Natural killer cell (primary cell): ENCODE measurements at regions of chr12 and their contacts with region 1.

Region 1: DNA sequence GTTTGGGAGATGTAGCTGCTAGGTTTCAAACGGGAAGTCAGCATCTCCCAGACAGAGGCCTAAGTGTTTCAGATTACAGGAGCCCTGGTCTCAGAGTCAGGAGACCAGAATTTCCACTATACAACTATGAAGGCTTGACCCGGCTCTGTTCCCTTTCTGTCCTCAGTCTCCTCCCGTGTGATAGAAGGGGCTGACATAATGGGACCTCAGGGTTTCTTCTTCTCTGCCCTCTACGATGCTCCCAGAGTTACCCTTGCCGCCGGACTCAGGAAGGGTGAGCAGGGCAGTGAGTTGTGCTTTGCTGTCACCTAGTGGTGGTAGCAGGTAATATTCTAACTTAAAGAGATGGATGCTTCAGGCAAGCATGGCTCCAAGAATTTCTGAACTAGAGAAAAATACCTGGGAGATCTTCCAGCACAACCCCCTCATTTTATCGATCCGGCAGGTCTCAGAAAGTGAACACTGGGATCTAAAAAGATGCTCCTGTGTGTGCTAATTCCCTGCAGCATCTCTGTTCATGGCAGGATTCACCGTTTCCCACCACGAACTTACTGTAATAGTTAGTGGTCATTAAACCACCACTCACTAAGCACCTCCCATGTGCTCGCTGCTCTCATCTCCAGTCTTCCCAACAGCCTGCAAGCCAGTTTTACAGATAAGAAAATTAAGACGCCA is 84.4 kb downstream of the VWF start:
- DNase-seq: peak in 1 of 2 donors; percentile 79
- ATAC-seq: peak; percentile 78 to 92 (median 84)
- H3K4me3 ChIP-seq: no peak overlapping the region
- H3K4me3 Mint-ChIP-seq: no peak overlapping the region
- H3K27ac ChIP-seq: no peak overlapping the region
- H3K27ac Mint-ChIP-seq: peak overlapping the region in 1 of 2 donors; percentile 45
- H3K4me1 ChIP-seq: peaks cover 3% of the 10 kb centered on the region
- H3K4me1 Mint-ChIP-seq: peaks cover 0 to 5% of the 10 kb centered on the region in 2 donors
- H3K27me3 ChIP-seq: no peaks in the 10 kb centered on the region
- H3K27me3 Mint-ChIP-seq: peaks cover 5% of the 10 kb centered on the region in 2 donors
- CTCF ChIP-seq: peak; percentile 88

Region 2: GRCh38 chr12:5965950-5966383 is 74.1 kb before region 1 on chr12:
- intact Hi-C with region 1: loop called (anchors 1 kb)
- DNase-seq: peak in 1 of 2 donors; percentile 63
- ATAC-seq: peak; percentile 73 to 90 (median 80)
- H3K4me3 ChIP-seq: no peak overlapping the region
- H3K4me3 Mint-ChIP-seq: no peak overlapping the region
- H3K27ac ChIP-seq: no peak overlapping the region
- H3K27ac Mint-ChIP-seq: no peak overlapping the region
- H3K4me1 ChIP-seq: no peaks in the 10 kb centered on the region
- H3K4me1 Mint-ChIP-seq: no peaks in the 10 kb centered on the region
- H3K27me3 ChIP-seq: no peaks in the 10 kb centered on the region
- H3K27me3 Mint-ChIP-seq: peaks cover 13 to 20% of the 10 kb centered on the region in 2 donors
- CTCF ChIP-seq: peak; percentile 60

Region 3: DNA sequence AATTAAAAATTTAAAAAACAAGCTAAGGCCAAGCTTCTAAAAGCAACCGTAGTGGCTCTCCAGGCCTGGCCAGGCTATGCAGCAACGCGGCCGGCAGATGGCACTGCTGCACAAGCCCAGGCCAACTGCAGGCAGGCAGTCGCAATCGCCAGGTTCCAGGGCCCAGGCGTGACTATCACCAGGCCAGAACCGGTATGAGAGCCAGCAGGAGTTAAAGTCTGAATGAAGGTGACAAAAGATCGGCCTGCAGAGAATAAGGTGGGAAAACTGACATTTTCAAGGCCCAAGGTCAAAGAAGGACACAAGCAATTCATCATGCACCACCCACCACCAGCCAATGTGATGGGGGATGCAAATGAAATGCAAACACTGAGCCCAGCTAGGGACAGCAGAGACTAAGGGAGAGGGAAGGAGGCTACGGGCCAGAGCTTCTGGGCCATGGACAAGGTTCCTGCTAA is 51.3 kb before region 1 on chr12:
- intact Hi-C with region 1: loop called (anchors 1 kb)
- DNase-seq: peak; percentile 67 to 82
- ATAC-seq: peak; percentile 88 to 99 (median 97)
- H3K4me3 ChIP-seq: no peak overlapping the region
- H3K4me3 Mint-ChIP-seq: no peak overlapping the region
- H3K27ac ChIP-seq: no peak overlapping the region
- H3K27ac Mint-ChIP-seq: no peak overlapping the region
- H3K4me1 ChIP-seq: no peaks in the 10 kb centered on the region
- H3K4me1 Mint-ChIP-seq: no peaks in the 10 kb centered on the region
- H3K27me3 ChIP-seq: no peaks in the 10 kb centered on the region
- H3K27me3 Mint-ChIP-seq: peaks cover 0 to 3% of the 10 kb centered on the region in 2 donors
- CTCF ChIP-seq: peak; percentile 98